Activated T-helper 2 cell treated with anti-CD3 and anti-CD28 coated beads, Interferon-gamma antibody, Interleukin-2, Interleukin-4, amounts not matched to agents 10 μg/mL and 5 μg/mL and 100 μg/mL, durations not matched to agents 14 hours and 24 hours and 36 hours (primary cell): ENCODE measurements at regions of chr11 and their contacts with region 1.

Region 1: GRCh38 chr11:48001438-48002021 is 21.2 kb downstream of the PTPRJ start:
- DNase-seq: peak; percentile 87
- H3K4me3 Mint-ChIP-seq: peak overlapping the region; percentile 69
- H3K27ac Mint-ChIP-seq: peak overlapping the region; percentile 99
- H3K4me1 Mint-ChIP-seq: peaks cover 70% of the 10 kb centered on the region
- H3K27me3 Mint-ChIP-seq: no peaks in the 10 kb centered on the region

Region 2: DNA sequence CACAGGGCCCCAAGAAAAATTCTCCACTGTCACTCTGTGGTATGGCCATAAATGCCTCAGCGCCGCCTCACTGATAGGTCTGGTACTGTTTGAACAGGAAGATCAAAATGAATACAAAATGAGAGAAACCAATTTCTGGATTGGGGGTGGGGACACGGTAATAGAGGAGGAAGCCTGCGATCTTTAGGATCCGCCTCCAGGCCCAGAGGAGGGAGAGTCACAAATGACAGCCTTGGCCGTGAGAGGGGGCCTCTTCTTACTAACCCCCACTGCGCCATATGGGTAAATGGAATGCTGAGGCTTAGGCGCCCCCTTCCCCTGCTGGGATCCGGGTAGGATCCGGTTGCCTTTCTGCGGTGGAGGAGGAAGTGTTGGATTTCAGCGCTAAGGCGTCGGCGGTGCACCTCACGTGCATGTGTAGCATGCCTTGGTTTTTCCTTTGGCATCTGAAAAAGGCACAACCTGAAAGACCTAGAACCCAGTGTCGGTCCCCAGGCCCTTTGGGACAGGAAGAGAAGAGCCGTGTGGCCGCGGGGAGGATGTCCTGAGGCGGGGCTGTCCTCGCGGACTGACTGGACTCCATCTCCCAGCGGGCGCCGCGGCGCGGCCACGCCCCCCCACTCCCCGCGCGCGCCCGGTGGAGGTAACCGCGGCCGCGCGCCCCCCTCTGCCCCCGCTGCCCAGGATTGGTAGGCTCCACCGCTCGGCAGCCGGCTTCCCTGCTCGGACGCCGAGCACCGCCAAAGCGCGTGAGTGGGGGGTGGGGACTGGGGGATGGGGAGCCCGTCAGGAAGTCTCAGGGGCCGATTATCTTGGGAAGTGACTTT is 732.3 kb before region 1 on chr11:
- intact Hi-C with region 1: loop called (anchors 5 kb)
- DNase-seq: peak; percentile 80
- H3K4me3 Mint-ChIP-seq: peak overlapping the region; percentile 84
- H3K27ac Mint-ChIP-seq: peak overlapping the region; percentile 97
- H3K4me1 Mint-ChIP-seq: peaks cover 53% of the 10 kb centered on the region
- H3K27me3 Mint-ChIP-seq: no peaks in the 10 kb centered on the region

Region 3: GRCh38 chr11:47863189-47863892 is 138.2 kb before region 1 on chr11:
- intact Hi-C with region 1: loop called (anchors 5 kb)
- DNase-seq: no peak
- H3K4me3 Mint-ChIP-seq: no peak overlapping the region
- H3K27ac Mint-ChIP-seq: peak overlapping the region; percentile 28
- H3K4me1 Mint-ChIP-seq: peaks cover 27% of the 10 kb centered on the region
- H3K27me3 Mint-ChIP-seq: no peaks in the 10 kb centered on the region

Region 4: DNA sequence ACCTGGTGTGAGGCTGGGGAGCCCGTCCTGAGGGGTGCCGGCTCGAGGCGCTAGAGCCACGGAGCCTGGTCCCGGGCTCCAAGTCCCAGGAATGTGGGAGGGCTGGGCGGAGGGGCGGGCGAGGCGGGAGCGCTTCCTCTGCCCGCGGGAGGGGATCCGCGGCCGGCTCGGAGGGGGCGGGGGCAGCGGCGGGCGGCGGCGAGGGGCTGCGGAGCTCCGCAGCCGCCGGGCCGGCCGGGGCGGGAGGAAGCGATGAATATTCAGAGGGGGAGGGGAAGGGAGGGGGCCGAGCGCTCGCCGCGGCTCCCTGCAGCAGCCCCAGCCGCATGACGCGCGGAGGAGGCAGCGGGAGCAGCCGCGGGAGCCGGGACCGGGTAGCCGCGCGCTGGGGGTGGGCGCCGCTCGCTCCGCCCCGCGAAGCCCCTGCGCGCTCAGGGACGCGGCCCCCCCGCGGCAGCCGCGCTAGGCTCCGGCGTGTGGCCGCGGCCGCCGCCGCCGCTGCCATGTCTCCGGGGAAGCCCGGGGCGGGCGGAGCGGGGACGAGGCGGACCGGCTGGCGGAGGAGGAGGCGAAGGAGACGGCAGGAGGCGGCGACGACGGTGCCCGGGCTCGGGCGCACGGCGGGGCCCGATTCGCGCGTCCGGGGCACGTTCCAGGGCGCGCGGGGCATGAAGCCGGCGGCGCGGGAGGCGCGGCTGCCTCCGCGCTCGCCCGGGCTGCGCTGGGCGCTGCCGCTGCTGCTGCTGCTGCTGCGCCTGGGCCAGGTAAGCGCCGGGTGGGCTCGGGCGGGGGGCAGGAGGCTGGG is 21.1 kb before region 1 on chr11 and contains the start of gene PTPRJ:
- intact Hi-C with region 1: loop called (anchors 1 kb)
- DNase-seq: peak; percentile 59
- H3K4me3 Mint-ChIP-seq: peak within 1 kb of the TSS; percentile 95
- H3K27ac Mint-ChIP-seq: peak within 1 kb of the TSS; percentile 34
- H3K4me1 Mint-ChIP-seq: peaks cover 24% of the 10 kb centered on the region
- H3K27me3 Mint-ChIP-seq: peaks cover 10% of the 10 kb centered on the region
- total RNA-seq, gene PTPRJ: 50.9 and 53.2 TPM in 2 replicates

Region 5: GRCh38 chr11:48020092-48020755 is 18.7 kb after region 1 on chr11:
- intact Hi-C with region 1: loop called (anchors 1 kb)
- DNase-seq: no peak
- H3K4me3 Mint-ChIP-seq: peak overlapping the region; percentile 57
- H3K27ac Mint-ChIP-seq: peak overlapping the region; percentile 89
- H3K4me1 Mint-ChIP-seq: peaks cover 71% of the 10 kb centered on the region
- H3K27me3 Mint-ChIP-seq: no peaks in the 10 kb centered on the region

Region 6: GRCh38 chr11:48097041-48097476 is 95.5 kb after region 1 on chr11:
- intact Hi-C with region 1: loop called (anchors 1 kb)
- DNase-seq: no peak
- H3K4me3 Mint-ChIP-seq: peak overlapping the region; percentile 4
- H3K27ac Mint-ChIP-seq: peak overlapping the region; percentile 74
- H3K4me1 Mint-ChIP-seq: peaks cover 61% of the 10 kb centered on the region
- H3K27me3 Mint-ChIP-seq: no peaks in the 10 kb centered on the region